Activated CD4-positive, alpha-beta memory T cell treated with anti-CD3 and anti-CD28 coated beads for 36 hours (primary cell): ENCODE measurements at regions of chr6 and their contacts with region 1.

Region 1: GRCh38 chr6:30219244-30219643 is 6.0 kb upstream of the TRIM26 start:
- DNase-seq: peak; percentile 60
- H3K4me3 Mint-ChIP-seq: no peak overlapping the region
- H3K27ac Mint-ChIP-seq: no peak overlapping the region
- H3K4me1 Mint-ChIP-seq: peaks cover 17% of the 10 kb centered on the region
- H3K27me3 Mint-ChIP-seq: no peaks in the 10 kb centered on the region

Region 2: DNA sequence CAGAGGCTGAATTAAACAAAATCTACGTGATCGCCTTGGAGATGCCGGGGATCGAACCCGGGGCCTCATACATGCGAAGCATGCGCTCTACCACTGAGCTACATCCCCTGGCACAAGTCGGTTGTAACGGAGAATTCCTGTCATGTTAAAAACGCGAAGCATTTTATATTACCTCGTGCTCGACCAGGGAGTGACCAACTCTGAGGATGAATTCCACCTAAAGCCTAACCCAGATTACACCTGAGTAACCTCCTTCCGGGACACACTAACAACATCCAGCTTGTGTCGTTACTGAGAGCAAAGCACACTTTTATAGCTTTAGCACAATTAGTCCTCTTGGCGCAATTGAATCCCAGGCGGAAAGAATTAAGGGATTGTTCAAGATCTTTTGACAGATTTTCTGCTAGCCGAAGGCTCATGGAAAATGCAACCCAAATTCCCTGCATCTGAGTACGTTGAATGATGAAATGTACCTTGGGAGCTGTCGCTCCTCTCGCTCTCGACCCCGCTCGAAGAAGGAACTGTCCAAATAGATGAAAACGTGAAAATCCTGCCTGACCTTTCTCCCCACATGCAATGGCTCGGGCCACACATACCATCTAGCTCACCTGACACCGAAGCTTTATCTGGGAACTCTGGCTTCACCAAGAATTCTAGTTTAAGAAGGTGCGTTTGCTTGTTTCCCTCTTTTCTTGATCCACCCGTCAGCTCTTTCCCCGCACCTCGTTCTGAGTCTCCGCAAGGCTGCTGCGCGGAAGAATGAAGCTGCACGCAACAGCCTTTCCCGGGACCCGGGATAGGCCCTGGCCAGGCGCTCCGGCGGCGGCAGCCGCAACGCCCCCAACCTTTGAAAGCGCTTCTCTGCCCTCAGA is 1545.2 kb before region 1 on chr6:
- CTCF ChIA-PET with region 1: no interaction called
- POLR2A ChIA-PET with region 1: no interaction called
- intact Hi-C with region 1: no loop called
- DNase-seq: peak; percentile 72
- H3K4me3 Mint-ChIP-seq: peak overlapping the region; percentile 69
- H3K27ac Mint-ChIP-seq: peak overlapping the region; percentile 61
- H3K4me1 Mint-ChIP-seq: peaks cover 12% of the 10 kb centered on the region
- H3K27me3 Mint-ChIP-seq: peaks cover 51% of the 10 kb centered on the region

Region 3: DNA sequence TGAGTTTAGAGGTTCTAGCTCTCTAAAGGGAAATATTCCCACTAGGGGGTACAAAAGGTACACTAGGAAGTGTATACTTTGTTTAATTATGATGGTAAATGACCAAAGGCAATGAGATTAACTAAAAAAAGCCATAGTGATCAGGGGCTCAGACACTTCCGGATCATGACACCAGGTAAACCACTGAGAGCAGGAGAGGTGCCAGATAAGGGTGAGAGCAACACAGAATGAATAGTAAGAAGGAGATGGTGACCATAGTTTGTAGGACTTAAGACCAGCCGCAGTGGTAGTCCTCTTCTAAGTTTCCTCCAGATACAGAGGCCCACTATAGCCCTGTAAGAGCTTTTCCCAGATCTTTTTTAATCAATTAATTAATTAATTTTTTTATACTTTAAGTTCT is 1007.8 kb before region 1 on chr6:
- CTCF ChIA-PET with region 1: no interaction called
- POLR2A ChIA-PET with region 1: no interaction called
- intact Hi-C with region 1: no loop called
- DNase-seq: no peak
- H3K4me3 Mint-ChIP-seq: no peak overlapping the region
- H3K27ac Mint-ChIP-seq: no peak overlapping the region
- H3K4me1 Mint-ChIP-seq: no peaks in the 10 kb centered on the region
- H3K27me3 Mint-ChIP-seq: peaks cover 24% of the 10 kb centered on the region

Region 4: GRCh38 chr6:30206799-30207618 is 12.2 kb before region 1 on chr6:
- CTCF ChIA-PET with region 1: interaction called, 10 read pairs
- POLR2A ChIA-PET with region 1: no interaction called
- intact Hi-C with region 1: no loop called
- DNase-seq: no peak
- H3K4me3 Mint-ChIP-seq: no peak overlapping the region
- H3K27ac Mint-ChIP-seq: no peak overlapping the region
- H3K4me1 Mint-ChIP-seq: peaks cover 73% of the 10 kb centered on the region
- H3K27me3 Mint-ChIP-seq: no peaks in the 10 kb centered on the region